ENCODE measurements at regions of chr7 and their contacts with region 1.

Region 1: DNA sequence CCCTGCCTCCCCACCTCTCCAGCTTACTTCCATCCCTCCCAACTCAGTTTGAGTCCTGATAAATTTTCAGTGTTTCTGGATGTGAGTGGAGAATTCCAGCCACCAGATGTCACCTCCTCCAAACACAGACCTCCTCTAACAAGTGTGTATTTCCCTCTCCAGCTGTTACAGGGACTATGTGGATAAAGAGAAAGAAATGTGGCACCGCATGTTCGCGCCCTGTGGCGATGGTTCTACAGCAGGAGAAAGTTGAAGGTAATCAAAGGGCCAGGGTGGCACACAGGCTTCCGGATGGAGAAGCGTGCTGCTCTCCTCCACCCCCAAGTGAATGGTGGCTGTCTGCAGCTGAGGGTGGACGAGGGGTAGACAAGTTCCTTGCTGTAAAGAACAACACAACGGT is 14.7 kb downstream of the FKBP6 start:
- DNase-seq: no peak
- ATAC-seq: no peak
- H3K4me3 Mint-ChIP-seq: no peak overlapping the region
- H3K27ac Mint-ChIP-seq: no peak overlapping the region
- H3K4me1 Mint-ChIP-seq: no peaks in the 10 kb centered on the region
- H3K27me3 Mint-ChIP-seq: peaks cover 3% of the 10 kb centered on the region

Region 2: DNA sequence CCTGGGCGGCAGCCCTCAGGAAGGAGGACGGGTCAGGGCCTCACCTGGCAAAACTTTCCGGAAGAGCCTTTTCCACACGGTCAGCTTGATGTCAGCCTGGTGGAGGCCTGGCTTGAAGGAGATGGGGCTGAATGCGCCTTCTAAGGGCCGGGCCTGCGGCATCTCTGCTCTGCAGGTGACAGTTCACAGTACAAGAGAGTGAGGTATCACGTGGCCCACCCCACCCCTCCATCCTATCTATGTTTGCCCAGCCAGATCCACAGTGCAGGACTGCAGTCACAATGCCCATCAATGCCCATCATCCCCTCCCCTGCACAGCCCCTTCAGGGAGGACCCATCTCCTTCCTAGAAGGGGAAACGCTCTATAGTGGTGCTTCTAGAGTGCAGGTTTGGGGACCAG is 26.1 kb before region 1 on chr7:
- CTCF ChIA-PET with region 1: no interaction called
- POLR2A ChIA-PET with region 1: no interaction called
- intact Hi-C with region 1: loop called in 1 of 2 experiments (anchors 2 kb)
- DNase-seq: no peak
- ATAC-seq: no peak
- H3K4me3 Mint-ChIP-seq: no peak overlapping the region
- H3K27ac Mint-ChIP-seq: no peak overlapping the region
- H3K4me1 Mint-ChIP-seq: no peaks in the 10 kb centered on the region
- H3K27me3 Mint-ChIP-seq: no peaks in the 10 kb centered on the region

Region 3: GRCh38 chr7:73746003-73746777 is 403.5 kb after region 1 on chr7:
- CTCF ChIA-PET with region 1: no interaction called
- POLR2A ChIA-PET with region 1: no interaction called
- intact Hi-C with region 1: no loop called
- DNase-seq: no peak
- ATAC-seq: no peak
- H3K4me3 Mint-ChIP-seq: no peak overlapping the region
- H3K27ac Mint-ChIP-seq: no peak overlapping the region
- H3K4me1 Mint-ChIP-seq: no peaks in the 10 kb centered on the region
- H3K27me3 Mint-ChIP-seq: peaks cover 3% of the 10 kb centered on the region

Region 4: GRCh38 chr7:74707238-74707637 is 1364.6 kb after region 1 on chr7:
- CTCF ChIA-PET with region 1: no interaction called
- POLR2A ChIA-PET with region 1: no interaction called
- intact Hi-C with region 1: no loop called
- DNase-seq: no peak
- ATAC-seq: no peak
- H3K4me3 Mint-ChIP-seq: no peak overlapping the region
- H3K27ac Mint-ChIP-seq: no peak overlapping the region
- H3K4me1 Mint-ChIP-seq: no peaks in the 10 kb centered on the region
- H3K27me3 Mint-ChIP-seq: no peaks in the 10 kb centered on the region